Adrenal gland (tissue), 19 donors: ENCODE measurements at regions of chr11 and their contacts with region 1.

Region 1: DNA sequence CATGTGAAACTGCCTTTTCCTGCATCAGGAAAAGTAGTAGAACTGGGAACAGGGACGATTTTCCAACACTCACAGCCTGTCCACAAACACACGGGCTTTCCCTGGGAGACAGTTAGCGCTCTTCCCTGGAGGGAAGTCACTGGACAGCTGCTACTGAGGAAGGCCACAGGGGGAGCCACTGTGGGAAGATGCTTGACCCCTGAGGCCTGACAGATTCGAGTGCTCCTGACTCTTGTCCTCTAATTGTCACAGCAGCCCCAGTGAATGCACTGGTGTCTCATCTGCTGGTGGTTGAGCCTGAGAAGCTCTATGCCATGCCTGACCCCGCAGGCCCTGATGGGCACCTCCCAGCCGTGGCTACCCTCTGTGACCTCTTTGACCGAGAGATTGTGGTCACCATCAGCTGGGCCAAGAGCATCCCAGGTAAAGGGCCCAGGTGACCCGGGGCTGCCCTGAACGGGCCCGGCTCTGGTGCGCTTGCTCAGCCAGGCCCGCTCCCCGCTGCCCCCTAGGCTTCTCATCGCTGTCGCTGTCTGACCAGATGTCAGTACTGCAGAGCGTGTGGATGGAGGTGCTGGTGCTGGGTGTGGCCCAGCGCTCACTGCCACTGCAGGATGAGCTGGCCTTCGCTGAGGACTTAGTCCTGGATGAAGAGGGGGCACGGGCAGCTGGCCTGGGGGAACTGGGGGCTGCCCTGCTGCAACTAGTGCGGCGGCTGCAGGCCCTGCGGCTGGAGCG is 2.7 kb downstream of the TRMT112 start:
- DNase-seq: peak in 2 of 7 donors; percentile 27 to 52
- H3K4me3 ChIP-seq: no peak overlapping the region
- H3K27ac ChIP-seq: peak overlapping the region in 3 of 5 donors; percentile 45 to 85 (median 81)
- H3K4me1 ChIP-seq: peaks cover 10 to 18% of the 10 kb centered on the region in 2 donors
- H3K27me3 ChIP-seq: no peaks in the 10 kb centered on the region
- CTCF ChIP-seq: no peak
- POLR2A ChIP-seq: no peak

Region 2: DNA sequence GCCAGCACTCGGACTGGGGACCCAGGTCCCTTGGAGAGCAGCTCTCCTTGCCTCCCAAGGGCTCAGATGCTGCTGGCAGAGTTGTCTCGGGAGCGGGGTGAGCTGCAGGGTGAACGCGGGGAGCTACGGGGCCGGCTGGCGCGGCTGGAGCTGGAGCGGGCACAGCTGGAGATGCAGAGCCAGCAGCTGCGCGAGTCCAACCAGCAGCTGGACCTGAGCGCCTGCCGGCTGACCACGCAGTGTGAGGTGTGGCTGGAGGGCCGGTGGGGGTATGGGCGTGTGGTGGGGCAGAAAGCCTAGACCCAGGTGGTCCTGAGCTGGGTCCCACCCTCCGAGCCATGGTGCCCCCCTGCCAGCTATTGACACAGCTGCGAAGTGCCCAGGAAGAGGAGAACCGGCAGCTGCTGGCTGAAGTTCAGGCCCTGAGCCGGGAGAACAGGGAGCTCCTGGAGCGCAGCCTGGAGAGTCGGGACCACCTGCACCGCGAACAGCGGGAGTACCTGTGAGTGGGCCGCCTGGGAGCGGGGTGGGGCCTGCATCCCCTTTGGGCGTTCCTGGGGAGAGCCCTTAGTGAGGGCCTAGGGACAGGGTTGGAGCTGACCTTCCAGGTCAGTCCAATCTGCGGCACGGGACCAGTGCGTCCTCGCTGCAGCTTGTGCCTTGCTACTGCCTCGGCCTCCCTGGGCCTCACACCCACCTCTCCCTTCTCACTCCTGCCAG is 38.5 kb after region 1 on chr11:
- intact Hi-C with region 1: loop called in 1 of 2 experiments (anchors 5 kb)
- DNase-seq: no peak
- H3K4me3 ChIP-seq: no peak overlapping the region
- H3K27ac ChIP-seq: no peak overlapping the region
- H3K4me1 ChIP-seq: peaks cover 8 to 16% of the 10 kb centered on the region in 2 donors
- H3K27me3 ChIP-seq: no peaks in the 10 kb centered on the region
- CTCF ChIP-seq: no peak
- POLR2A ChIP-seq: no peak

Region 3: DNA sequence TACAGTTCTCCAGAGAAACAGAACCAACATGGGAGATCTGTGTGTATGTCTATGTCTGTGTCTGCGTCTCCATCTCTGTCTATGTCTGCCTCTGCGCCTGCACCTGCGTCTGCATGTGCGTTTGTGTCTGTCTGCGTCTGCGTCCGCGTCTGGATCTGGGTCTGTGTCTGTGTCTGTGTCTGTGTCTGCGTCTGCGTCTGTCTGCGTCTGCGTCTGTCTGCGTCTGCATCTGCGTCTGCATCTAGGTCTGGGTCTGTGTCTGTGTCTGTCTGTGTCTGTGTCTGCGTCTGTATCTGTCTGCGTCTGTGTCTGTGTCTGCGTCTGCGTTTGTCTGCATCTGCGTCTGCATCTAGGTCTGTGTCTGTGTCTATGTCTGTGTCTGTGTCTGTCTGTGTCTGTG is 188.0 kb after region 1 on chr11:
- intact Hi-C with region 1: no loop called
- DNase-seq: peak in 1 of 7 donors; percentile 78
- H3K4me3 ChIP-seq: no peak overlapping the region
- H3K27ac ChIP-seq: no peak overlapping the region
- H3K4me1 ChIP-seq: peaks cover 9 to 12% of the 10 kb centered on the region in 2 donors
- H3K27me3 ChIP-seq: peaks cover 3% of the 10 kb centered on the region
- CTCF ChIP-seq: no peak
- POLR2A ChIP-seq: no peak